ENCODE measurements at regions of chr2 and their contacts with region 1.

Region 1: GRCh38 chr2:20350753-20351554 is at the start of gene PUM2:
- DNase-seq: peak; percentile 82 to 96
- H3K4me3 ChIP-seq: peak within 1 kb of the TSS; percentile 76 to 94
- H3K27ac ChIP-seq: peak within 1 kb of the TSS; percentile 88 to 93
- H3K4me1 ChIP-seq: peaks cover 0 to 29% of the 10 kb centered on the region in 2 donors
- H3K27me3 ChIP-seq: no peaks in the 10 kb centered on the region
- CTCF ChIP-seq: peak in 1 of 3 experiments; percentile 7
- total RNA-seq, gene PUM2: 22.4 TPM

Region 2: DNA sequence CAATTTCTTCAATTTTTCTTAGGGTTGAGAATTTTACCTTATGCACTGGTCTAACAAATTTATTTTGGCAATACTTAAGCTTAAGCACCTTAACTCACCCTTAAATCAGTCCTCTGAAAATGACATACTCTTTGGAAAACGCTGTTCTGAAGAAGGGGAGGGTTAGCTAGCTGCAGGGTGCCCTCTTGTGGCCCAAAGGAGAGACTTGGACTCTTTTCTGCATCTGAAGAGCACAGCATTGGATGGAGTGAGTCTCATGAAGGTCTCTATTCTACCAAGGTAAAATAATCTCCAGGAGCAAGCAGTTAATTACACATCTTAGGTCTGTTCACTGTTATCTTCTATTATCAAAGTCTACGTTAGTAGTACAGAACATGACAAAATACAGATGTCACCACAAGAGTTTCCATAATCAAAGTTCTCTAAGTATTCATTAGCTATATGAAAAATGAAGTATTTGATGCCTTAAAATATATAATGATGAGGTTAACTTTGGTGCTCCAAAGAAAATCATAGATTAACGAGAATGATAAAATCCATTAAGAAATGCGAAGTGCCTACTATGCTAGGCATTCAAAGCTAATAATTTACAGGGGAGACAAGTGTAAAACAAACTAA is 24.7 kb before region 1 on chr2:
- intact Hi-C with region 1: loop called (anchors 1 kb)
- DNase-seq: no peak
- H3K4me3 ChIP-seq: no peak overlapping the region
- H3K27ac ChIP-seq: no peak overlapping the region
- H3K4me1 ChIP-seq: peaks cover 6 to 15% of the 10 kb centered on the region in 2 donors
- H3K27me3 ChIP-seq: no peaks in the 10 kb centered on the region
- CTCF ChIP-seq: peak; percentile 19 to 70 (median 61)

Region 3: GRCh38 chr2:20650880-20651730 is 300.2 kb after region 1 on chr2 and contains the start of gene HS1BP3:
- intact Hi-C with region 1: loop called (anchors 1 kb)
- DNase-seq: peak in 1 of 2 donors; percentile 92
- H3K4me3 ChIP-seq: peak within 1 kb of the TSS; percentile 69 to 100
- H3K27ac ChIP-seq: peak within 1 kb of the TSS; percentile 83 to 95
- H3K4me1 ChIP-seq: peaks cover 20 to 33% of the 10 kb centered on the region in 2 donors
- H3K27me3 ChIP-seq: no peaks in the 10 kb centered on the region
- CTCF ChIP-seq: peak; percentile 20 to 100 (median 64)
- total RNA-seq, gene HS1BP3: 40.0 TPM